ENCODE measurements at regions of chr4 and their contacts with region 1.

Region 1: DNA sequence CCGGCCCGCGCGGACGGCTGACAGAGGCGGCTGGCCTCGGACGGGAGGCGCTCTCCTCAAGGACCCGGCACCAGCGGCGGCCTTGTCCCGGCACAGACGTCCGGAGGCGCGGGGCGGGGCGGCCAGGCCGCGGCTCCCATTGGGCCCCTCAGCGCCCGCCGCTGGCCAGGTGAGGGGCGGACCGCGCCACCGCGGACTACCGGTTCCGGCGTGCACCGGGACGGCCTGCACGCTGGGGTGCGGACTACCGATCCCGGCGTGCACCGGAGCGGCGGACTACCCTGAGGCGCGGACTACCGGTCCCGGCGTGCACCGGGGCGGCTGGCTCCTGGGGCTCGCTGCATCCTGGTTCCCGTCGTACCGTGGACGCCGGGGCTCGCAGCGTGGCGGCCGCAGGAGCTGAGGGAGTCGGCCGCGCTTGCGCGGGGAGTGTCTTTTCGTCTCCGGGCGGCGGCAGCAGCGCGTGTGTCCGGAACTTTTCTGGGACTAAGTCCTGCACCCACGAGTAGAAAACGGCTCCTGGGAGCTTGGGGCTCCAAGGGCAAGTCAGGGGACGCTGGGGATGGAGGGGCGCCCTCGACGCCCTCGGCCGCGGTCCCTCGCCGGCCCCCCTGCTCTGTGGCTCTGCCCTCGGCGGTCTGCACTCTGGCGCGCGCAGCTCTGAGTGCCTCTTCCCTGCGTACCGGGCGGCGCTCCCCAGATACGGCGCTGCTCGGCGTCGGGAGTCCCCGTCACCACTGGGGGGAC is at the start of gene LETM1:
- DNase-seq: peak; percentile 97
- total RNA-seq, gene LETM1: 37.8 TPM

Region 2: GRCh38 chr4:1784789-1785591 is 71.2 kb before region 1 on chr4:
- intact Hi-C with region 1: no loop called
- DNase-seq: peak; percentile 82

Region 3: DNA sequence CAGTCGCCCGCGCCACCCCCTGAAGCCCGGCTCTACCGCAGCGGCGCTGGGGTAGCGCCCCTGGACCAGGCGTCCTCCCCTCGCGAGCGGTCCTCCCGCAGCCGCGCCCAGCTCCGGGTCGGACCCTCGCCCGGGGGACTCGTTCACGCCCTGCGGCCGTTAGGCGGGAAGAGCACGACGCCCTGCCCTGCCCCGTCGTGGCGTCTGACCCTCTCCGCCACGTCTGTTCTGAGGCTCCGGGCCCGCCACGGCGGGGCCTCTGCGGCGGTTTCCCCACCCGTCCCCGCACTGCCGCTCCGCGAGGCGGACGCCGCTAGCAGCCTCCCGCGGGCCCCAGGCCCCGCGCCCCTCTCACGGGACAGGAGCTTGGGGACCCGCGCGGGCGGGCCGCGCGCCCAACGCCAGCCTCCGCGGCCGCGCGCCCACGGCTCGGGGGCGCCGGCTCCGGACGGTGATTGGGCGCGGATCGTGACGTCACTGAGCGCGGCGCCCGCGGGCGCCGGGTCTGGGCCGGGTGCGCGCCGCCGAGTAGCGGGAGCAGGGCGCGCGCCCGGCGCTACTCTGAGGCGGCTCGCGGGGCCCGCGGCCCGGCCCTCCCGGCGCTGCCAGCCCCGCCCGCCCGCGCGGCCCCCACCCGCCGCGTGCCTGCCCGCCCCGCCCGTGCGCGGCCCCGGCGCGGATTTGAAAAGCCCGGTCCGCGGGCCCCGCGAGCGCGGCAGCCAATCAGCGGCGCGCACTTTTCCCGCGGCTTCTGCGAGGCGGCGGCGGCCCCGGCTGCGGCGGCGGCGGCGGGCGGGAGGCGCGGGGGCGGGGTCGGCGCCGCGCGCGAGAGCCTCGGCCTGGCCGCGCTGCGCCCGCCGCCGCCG is 14.6 kb after region 1 on chr4 and contains the start of gene NSD2:
- intact Hi-C with region 1: loop called (anchors 2 kb)
- DNase-seq: peak; percentile 93
- total RNA-seq, gene NSD2: 60.4 TPM

Measured in cardiac septum (tissue), 1 donor.